ENCODE measurements at regions of chr3 and their contacts with region 1.

Region 1: GRCh38 chr3:126752303-126752842 is 48.3 kb downstream of the CHCHD6 start:
- DNase-seq: peak; percentile 61
- H3K4me3 ChIP-seq: no peak overlapping the region
- H3K27ac ChIP-seq: peak overlapping the region; percentile 78
- H3K4me1 ChIP-seq: peaks cover 34% of the 10 kb centered on the region
- H3K27me3 ChIP-seq: no peaks in the 10 kb centered on the region
- CTCF ChIP-seq: peak; percentile 88 to 98

Region 2: GRCh38 chr3:126679318-126679751 is 73.0 kb before region 1 on chr3:
- CTCF ChIA-PET with region 1: no interaction called
- dilution Hi-C with region 1: no loop called
- in situ Hi-C with region 1: no loop called
- intact Hi-C with region 1: loop called (anchors 1 kb)
- DNase-seq: peak; percentile 55
- H3K4me3 ChIP-seq: peak overlapping the region in 1 of 3 experiments; percentile 15
- H3K27ac ChIP-seq: no peak overlapping the region
- H3K4me1 ChIP-seq: peaks cover 5% of the 10 kb centered on the region
- H3K27me3 ChIP-seq: no peaks in the 10 kb centered on the region
- CTCF ChIP-seq: peak; percentile 90 to 95

Region 3: GRCh38 chr3:126816986-126817777 is 64.8 kb after region 1 on chr3:
- CTCF ChIA-PET with region 1: no interaction called
- dilution Hi-C with region 1: no loop called
- in situ Hi-C with region 1: no loop called
- intact Hi-C with region 1: no loop called
- DNase-seq: no peak
- H3K4me3 ChIP-seq: no peak overlapping the region
- H3K27ac ChIP-seq: no peak overlapping the region
- H3K4me1 ChIP-seq: no peaks in the 10 kb centered on the region
- H3K27me3 ChIP-seq: no peaks in the 10 kb centered on the region
- CTCF ChIP-seq: no peak

Region 4: GRCh38 chr3:126911162-126912026 is 159.0 kb after region 1 on chr3:
- CTCF ChIA-PET with region 1: no interaction called
- dilution Hi-C with region 1: no loop called
- in situ Hi-C with region 1: no loop called
- intact Hi-C with region 1: loop called (anchors 1 kb)
- DNase-seq: peak; percentile 99
- H3K4me3 ChIP-seq: no peak overlapping the region
- H3K27ac ChIP-seq: peak overlapping the region; percentile 78
- H3K4me1 ChIP-seq: peaks cover 48% of the 10 kb centered on the region
- H3K27me3 ChIP-seq: no peaks in the 10 kb centered on the region
- CTCF ChIP-seq: no peak

Region 5: DNA sequence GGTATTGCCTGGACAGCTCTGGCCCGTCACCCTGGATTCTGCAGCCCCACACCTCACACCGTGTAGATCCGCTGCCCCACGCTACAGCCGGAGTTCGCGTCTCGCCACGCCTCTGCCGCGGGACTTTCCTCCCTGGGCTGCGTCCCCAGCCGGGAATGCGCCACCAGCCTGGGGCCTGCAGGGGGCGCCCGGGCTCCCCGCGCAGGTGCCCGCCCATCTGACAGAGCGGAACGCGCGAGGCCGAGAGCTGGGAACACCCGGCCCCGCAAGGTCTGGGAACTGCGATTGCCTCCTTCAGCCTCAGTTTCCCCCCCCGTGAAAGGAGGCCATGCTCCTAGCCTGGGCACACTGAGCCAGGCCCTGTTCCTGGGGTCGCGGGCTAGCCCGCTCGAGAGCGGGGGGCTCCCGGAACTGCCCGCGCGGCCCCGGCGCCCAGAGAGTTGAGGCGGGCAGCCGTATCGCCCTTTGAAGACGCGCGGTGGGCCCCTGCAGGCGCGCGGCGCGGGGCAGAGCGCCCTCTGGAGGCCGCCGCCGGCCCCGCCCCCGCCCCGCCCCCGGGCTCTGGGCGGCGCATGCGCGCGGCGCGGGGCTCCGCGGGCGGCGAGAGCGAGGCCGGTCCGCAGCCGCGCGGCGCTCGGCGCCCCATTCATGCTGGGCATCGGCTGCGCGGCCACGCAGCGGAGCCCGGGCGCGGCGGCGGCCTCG is 230.2 kb after region 1 on chr3 and contains the start of gene PLXNA1:
- CTCF ChIA-PET with region 1: no interaction called
- dilution Hi-C with region 1: no loop called
- in situ Hi-C with region 1: loop called (anchors 5 to 10 kb)
- intact Hi-C with region 1: loop called (anchors 1 kb)
- DNase-seq: peak; percentile 85
- H3K4me3 ChIP-seq: peak within 1 kb of the TSS; percentile 70 to 81 (median 71)
- H3K27ac ChIP-seq: peak within 1 kb of the TSS; percentile 50
- H3K4me1 ChIP-seq: peaks cover 36% of the 10 kb centered on the region
- H3K27me3 ChIP-seq: no peaks in the 10 kb centered on the region
- CTCF ChIP-seq: peak; percentile 81 to 89
- total RNA-seq, gene PLXNA1: 104 to 156 TPM

Region 6: DNA sequence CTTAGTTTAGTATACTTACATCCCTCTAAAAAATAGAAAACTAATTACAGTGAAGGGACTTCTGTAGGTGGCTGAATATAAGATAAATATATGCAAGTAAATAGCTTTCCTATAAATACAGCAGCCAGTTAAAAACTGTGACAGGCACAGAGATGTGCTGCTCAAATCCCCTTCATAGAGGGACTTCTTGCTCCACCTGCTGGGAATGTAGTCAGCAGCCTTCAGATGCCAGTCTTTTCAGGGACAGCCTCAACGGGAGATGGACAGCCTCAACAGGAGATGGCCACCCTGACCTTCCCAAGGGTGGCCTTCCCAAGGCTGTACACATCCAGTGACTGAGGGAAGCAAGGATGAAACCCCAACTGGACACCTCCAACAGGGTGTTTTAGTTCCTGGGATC is 424.9 kb after region 1 on chr3:
- CTCF ChIA-PET with region 1: no interaction called
- dilution Hi-C with region 1: no loop called
- in situ Hi-C with region 1: no loop called
- intact Hi-C with region 1: loop called (anchors 1 kb)
- DNase-seq: no peak
- H3K4me3 ChIP-seq: no peak overlapping the region
- H3K27ac ChIP-seq: no peak overlapping the region
- H3K4me1 ChIP-seq: no peaks in the 10 kb centered on the region
- H3K27me3 ChIP-seq: no peaks in the 10 kb centered on the region
- CTCF ChIP-seq: peak in 1 of 2 donors; percentile 35

Region 7: GRCh38 chr3:127473244-127474024 is 721.1 kb after region 1 on chr3:
- CTCF ChIA-PET with region 1: interaction called, 3 read pairs
- dilution Hi-C with region 1: no loop called
- in situ Hi-C with region 1: no loop called
- intact Hi-C with region 1: loop called (anchors 5 kb)
- DNase-seq: no peak
- H3K4me3 ChIP-seq: no peak overlapping the region
- H3K27ac ChIP-seq: no peak overlapping the region
- H3K4me1 ChIP-seq: no peaks in the 10 kb centered on the region
- H3K27me3 ChIP-seq: no peaks in the 10 kb centered on the region
- CTCF ChIP-seq: peak; percentile 34 to 52

Measured in mammary epithelial cell (primary cell).